ENCODE measurements at regions of chr13 and their contacts with region 1.

Region 1: GRCh38 chr13:98653463-98653985 is 76.6 kb upstream of the STK24 start:
- DNase-seq: peak; percentile 85
- H3K4me3 Mint-ChIP-seq: no peak overlapping the region
- H3K27ac Mint-ChIP-seq: no peak overlapping the region
- H3K4me1 Mint-ChIP-seq: peaks cover 5% of the 10 kb centered on the region
- H3K27me3 Mint-ChIP-seq: peaks cover 11% of the 10 kb centered on the region
- CTCF ChIP-seq: peak; percentile 71

Region 2: DNA sequence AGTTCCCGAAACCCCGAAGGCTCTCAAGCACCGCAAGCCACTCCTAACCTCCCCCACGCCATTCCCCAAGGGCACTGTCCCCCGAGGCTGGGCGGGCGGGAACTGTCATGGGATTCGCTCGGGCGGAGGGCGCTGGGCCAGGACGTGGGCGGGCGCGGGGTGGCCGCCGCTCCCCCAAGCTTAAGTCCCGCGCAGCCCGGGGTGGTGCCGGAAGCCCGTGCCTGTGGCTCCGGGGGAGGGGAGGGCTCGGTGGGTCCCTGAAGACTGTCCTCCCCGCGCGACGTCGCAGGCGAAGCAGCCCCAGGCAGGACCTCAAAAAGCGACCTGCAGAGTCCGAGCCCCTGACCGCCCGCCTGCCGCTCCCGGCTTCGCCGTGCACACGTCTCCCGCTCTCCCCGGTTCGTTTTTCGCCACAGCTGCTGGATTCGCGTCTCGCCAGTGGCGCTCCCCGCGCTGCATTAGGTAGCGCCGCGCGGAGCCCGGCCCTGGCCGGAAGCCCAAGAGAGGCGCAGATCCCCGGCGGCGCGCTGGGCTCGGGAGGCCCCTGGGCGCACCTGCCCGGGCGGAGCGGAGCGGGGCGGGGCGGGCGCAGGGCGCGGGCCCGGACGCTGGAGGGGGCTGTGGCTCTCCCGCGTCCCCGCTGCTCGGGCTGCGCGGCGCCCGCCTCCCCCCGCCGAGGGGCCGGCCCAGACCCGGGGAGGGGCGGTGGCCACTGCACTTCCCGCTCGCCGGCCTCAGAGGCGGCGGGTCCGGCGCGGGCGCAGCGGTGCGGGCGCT is 511.0 kb before region 1 on chr13 and contains the start of gene FARP1:
- CTCF ChIA-PET with region 1: no interaction called
- POLR2A ChIA-PET with region 1: no interaction called
- intact Hi-C with region 1: loop called (anchors 5 kb)
- DNase-seq: peak; percentile 70
- H3K4me3 Mint-ChIP-seq: peak within 1 kb of the TSS; percentile 76
- H3K27ac Mint-ChIP-seq: peak within 1 kb of the TSS; percentile 46
- H3K4me1 Mint-ChIP-seq: peaks cover 16% of the 10 kb centered on the region
- H3K27me3 Mint-ChIP-seq: peaks cover 12% of the 10 kb centered on the region
- CTCF ChIP-seq: peak; percentile 30
- total RNA-seq, gene FARP1: 20.7 and 30.1 TPM in 2 replicates

Region 3: GRCh38 chr13:98484289-98485219 is 169.0 kb before region 1 on chr13:
- CTCF ChIA-PET with region 1: interaction called, 71 read pairs
- POLR2A ChIA-PET with region 1: interaction called, 17 read pairs
- intact Hi-C with region 1: loop called (anchors 10 kb)
- DNase-seq: peak; percentile 99
- H3K4me3 Mint-ChIP-seq: peak overlapping the region; percentile 68
- H3K27ac Mint-ChIP-seq: peak overlapping the region; percentile 94
- H3K4me1 Mint-ChIP-seq: peaks cover 47% of the 10 kb centered on the region
- H3K27me3 Mint-ChIP-seq: no peaks in the 10 kb centered on the region
- CTCF ChIP-seq: no peak

Region 4: GRCh38 chr13:98584668-98585391 is 68.7 kb before region 1 on chr13:
- CTCF ChIA-PET with region 1: interaction called, 11 read pairs
- POLR2A ChIA-PET with region 1: no interaction called
- intact Hi-C with region 1: no loop called
- DNase-seq: peak; percentile 29
- H3K4me3 Mint-ChIP-seq: no peak overlapping the region
- H3K27ac Mint-ChIP-seq: no peak overlapping the region
- H3K4me1 Mint-ChIP-seq: peaks cover 12% of the 10 kb centered on the region
- H3K27me3 Mint-ChIP-seq: no peaks in the 10 kb centered on the region
- CTCF ChIP-seq: no peak

Region 5: GRCh38 chr13:98664924-98665637 is 11.6 kb after region 1 on chr13:
- CTCF ChIA-PET with region 1: interaction called, 15 read pairs
- POLR2A ChIA-PET with region 1: interaction called, 3 read pairs
- intact Hi-C with region 1: no loop called
- DNase-seq: no peak
- H3K4me3 Mint-ChIP-seq: no peak overlapping the region
- H3K27ac Mint-ChIP-seq: no peak overlapping the region
- H3K4me1 Mint-ChIP-seq: peaks cover 9% of the 10 kb centered on the region
- H3K27me3 Mint-ChIP-seq: peaks cover 30% of the 10 kb centered on the region
- CTCF ChIP-seq: no peak